ENCODE measurements at regions of chr2 and their contacts with region 1.

Region 1: GRCh38 chr2:73233154-73233931 is at the start of gene PRADC1:
- DNase-seq: peak; percentile 99 to 100
- ATAC-seq: peak; percentile 84 to 95
- H3K4me3 ChIP-seq: peak within 1 kb of the TSS; percentile 64
- H3K27ac ChIP-seq: peak within 1 kb of the TSS; percentile 85 to 92
- H3K4me1 ChIP-seq: peaks cover 24% of the 10 kb centered on the region
- CTCF ChIP-seq: no peak
- EP300 ChIP-seq: no peak
- POLR2A ChIP-seq: peak; percentile 75
- RAD21 ChIP-seq: no peak
- polyA plus RNA-seq, gene PRADC1: 9.5 and 11.2 TPM in 2 replicates

Region 2: DNA sequence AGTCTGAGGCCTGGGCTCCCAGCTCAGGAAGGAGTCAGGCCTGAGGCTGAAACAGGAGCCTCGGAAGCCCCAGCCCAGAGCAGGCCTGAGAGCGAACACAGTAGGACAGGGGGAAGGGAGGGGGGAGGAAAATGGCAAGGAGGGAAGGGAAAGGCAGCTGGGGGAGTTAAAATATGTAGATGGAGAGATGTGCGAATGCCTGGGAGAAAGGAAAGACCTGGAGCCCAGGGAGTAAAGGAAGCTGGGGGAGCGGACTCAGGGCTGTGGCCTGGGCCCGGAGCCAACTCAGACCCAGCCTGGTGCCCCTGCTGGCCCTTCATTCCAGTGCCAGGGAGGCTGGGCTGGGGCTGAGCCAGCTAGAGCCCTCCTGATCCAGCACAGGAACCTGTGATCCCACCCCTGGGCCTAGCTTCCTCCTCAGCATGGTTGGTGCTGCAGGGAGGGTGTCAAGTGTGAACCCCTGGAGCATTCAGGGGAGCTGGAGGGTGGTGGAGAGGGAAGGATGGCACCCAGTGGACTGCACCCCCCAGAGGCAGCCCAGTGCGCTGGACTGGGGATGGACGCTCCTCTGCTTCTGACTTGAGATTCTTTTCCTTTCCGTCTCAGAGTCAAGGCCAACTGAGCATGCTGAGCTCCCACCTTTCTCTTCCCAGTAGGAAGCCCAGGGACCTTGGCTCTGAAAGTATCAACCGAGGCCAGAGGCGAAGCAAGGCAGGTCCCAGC is 269.8 kb before region 1 on chr2:
- CTCF ChIA-PET with region 1: no interaction called
- POLR2A ChIA-PET with region 1: no interaction called
- DNase-seq: no peak
- ATAC-seq: peak in 1 of 2 experiments; percentile 19; a peak in 3 of 6 replicates
- H3K4me3 ChIP-seq: no peak overlapping the region
- H3K27ac ChIP-seq: no peak overlapping the region
- H3K4me1 ChIP-seq: no peaks in the 10 kb centered on the region
- CTCF ChIP-seq: no peak
- EP300 ChIP-seq: no peak
- POLR2A ChIP-seq: no peak
- RAD21 ChIP-seq: no peak

Region 3: DNA sequence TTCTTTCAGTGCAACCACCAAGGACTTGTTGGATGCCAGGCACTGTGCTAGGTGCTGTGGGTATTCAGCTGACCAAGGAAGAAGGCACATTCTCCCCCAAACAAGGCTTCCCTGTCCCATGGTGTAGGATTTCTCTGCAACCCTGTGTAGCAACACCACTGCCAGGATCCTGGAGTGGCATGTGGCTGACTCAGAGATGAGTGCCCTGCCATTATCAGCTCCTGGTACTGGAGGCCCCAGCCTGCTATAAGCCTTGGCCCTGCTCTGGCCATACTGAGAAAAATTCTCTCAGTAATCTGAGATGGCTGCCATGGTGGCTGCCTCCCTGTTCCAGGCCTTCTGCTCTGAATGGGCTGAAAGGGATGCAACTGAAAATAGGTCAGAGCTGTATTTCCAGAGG is 15.0 kb before region 1 on chr2:
- CTCF ChIA-PET with region 1: interaction called, 37 read pairs
- POLR2A ChIA-PET with region 1: interaction called, 16 read pairs
- DNase-seq: no peak
- ATAC-seq: no peak
- H3K4me3 ChIP-seq: no peak overlapping the region
- H3K27ac ChIP-seq: no peak overlapping the region
- H3K4me1 ChIP-seq: peaks cover 9% of the 10 kb centered on the region
- CTCF ChIP-seq: no peak
- EP300 ChIP-seq: no peak
- POLR2A ChIP-seq: no peak
- RAD21 ChIP-seq: no peak

Region 4: GRCh38 chr2:73243884-73244570 is 10.7 kb after region 1 on chr2:
- CTCF ChIA-PET with region 1: interaction called, 14 read pairs
- POLR2A ChIA-PET with region 1: interaction called, 10 read pairs
- DNase-seq: no peak
- ATAC-seq: no peak
- H3K4me3 ChIP-seq: no peak overlapping the region
- H3K27ac ChIP-seq: no peak overlapping the region
- H3K4me1 ChIP-seq: peaks cover 2% of the 10 kb centered on the region; the same call in 1 of the 3 replicates
- CTCF ChIP-seq: no peak
- EP300 ChIP-seq: no peak
- POLR2A ChIP-seq: no peak
- RAD21 ChIP-seq: no peak

Region 5: DNA sequence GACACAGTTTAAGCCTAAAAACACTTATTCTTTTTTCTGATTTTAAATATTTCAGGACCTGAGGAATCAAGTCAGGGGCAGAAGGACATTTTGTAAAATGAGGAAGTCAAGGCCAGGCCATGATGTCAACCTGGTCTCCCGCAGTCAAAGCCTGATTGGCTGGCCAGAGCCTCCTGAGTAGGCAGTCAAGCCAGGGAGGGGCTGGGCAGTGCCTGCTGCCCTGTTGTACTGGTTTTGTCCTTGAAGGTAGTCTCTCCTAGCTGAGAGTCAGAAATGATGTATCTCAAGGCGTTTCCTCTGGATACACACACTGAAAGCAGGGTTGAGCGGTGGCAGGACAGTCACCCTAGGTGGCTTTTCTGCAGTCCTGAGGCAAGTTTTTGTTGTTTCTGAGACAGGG is 20.6 kb after region 1 on chr2:
- CTCF ChIA-PET with region 1: interaction called, 8 read pairs
- POLR2A ChIA-PET with region 1: interaction called, 12 read pairs
- DNase-seq: no peak
- ATAC-seq: no peak; a peak in 2 of 6 replicates
- H3K4me3 ChIP-seq: no peak overlapping the region
- H3K27ac ChIP-seq: no peak overlapping the region
- H3K4me1 ChIP-seq: no peaks in the 10 kb centered on the region
- CTCF ChIP-seq: no peak
- EP300 ChIP-seq: no peak
- POLR2A ChIP-seq: no peak
- RAD21 ChIP-seq: no peak

Region 6: GRCh38 chr2:73385595-73386341 is 152.4 kb after region 1 on chr2 and contains the start of gene ALMS1:
- CTCF ChIA-PET with region 1: no interaction called
- POLR2A ChIA-PET with region 1: interaction called, 12 read pairs
- DNase-seq: peak; percentile 85 to 94
- ATAC-seq: peak; percentile 91 to 94
- H3K4me3 ChIP-seq: peak within 1 kb of the TSS; percentile 69
- H3K27ac ChIP-seq: peak within 1 kb of the TSS; percentile 82 to 94
- H3K4me1 ChIP-seq: peaks cover 10% of the 10 kb centered on the region; the same call in 2 of the 3 replicates
- CTCF ChIP-seq: no peak
- EP300 ChIP-seq: no peak
- POLR2A ChIP-seq: peak; percentile 81
- RAD21 ChIP-seq: peak in 1 of 2 experiments; percentile 32; a peak in 1 of 5 replicates
- polyA plus RNA-seq, gene ALMS1: 12.2 and 13.5 TPM in 2 replicates

Measured in A549 (cell line).